GM18951 (cell line): ENCODE measurements at regions of chr1 and their contacts with region 1.

Region 1: GRCh38 chr1:203702130-203702577 is 62.8 kb upstream of the LAX1 start:
- POLR2A ChIP-seq: no peak

Region 2: GRCh38 chr1:203038891-203039608 is 663.1 kb before region 1 on chr1:
- in situ Hi-C with region 1: no loop called
- POLR2A ChIP-seq: no peak

Region 3: GRCh38 chr1:203504397-203505250 is 197.5 kb before region 1 on chr1:
- in situ Hi-C with region 1: loop called (anchors 10 kb)
- POLR2A ChIP-seq: no peak

Region 4: DNA sequence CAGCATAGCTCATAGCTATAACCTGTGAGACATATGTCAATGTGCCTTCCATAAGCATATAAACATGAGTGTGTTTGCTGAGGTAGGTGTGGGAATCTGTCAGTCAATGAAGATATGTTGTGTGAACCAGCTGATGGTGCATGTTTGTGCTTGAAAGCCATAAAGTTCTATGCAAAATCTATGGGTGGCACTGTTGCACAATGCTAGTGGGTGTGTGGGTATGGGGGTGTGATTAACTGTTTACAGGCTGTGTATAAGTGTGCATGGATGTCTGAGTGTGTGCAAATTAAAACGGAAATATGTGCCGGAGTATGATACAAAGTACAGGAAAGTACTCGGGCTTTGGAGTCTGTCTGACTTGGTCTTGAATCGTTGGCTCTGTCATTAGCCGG is 76.5 kb before region 1 on chr1:
- in situ Hi-C with region 1: loop called (anchors 10 kb)
- POLR2A ChIP-seq: no peak